SK-N-SH (cell line): ENCODE measurements at regions of chr11 and their contacts with region 1.

Region 1: DNA sequence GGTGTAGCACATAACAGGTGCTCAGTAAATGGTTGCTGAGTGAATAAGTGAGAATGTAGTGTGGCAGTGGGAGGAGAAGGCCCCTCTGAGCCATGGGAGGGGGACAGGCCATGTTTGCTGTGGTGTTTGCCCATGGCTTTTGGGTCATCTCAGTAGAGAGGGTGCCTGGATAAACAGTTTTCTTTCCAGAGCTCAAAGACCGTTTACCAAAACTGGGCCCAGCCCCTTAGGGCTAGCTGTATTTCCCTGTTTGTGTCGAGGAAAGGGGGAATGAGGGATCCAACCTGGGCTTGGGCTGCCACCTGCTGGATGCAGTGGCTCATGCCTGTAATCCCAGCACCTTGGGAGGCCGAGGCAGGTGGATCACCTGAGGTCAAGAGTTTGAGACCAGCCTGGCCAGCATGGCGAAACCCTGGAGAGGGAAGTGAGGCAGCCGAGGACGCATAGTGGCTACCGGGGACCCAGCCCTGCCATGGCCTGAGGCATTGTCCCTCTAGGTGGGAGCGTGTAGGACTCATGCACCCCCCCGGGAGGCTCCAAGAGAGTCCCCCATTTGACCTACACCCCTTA is 8.7 kb upstream of the LTO1 start:
- DNase-seq: no peak
- H3K4me3 ChIP-seq: no peak overlapping the region
- H3K27ac ChIP-seq: no peak overlapping the region
- H3K4me1 ChIP-seq: no peaks in the 10 kb centered on the region; a peak in 1 of 4 replicates
- H3K27me3 ChIP-seq: no peaks in the 10 kb centered on the region
- CTCF ChIP-seq: peak; percentile 47
- EP300 ChIP-seq: no peak
- RAD21 ChIP-seq: peak; percentile 59

Region 2: GRCh38 chr11:69670158-69670845 is 13.5 kb before region 1 on chr11:
- CTCF ChIA-PET with region 1: interaction called, 24 read pairs
- POLR2A ChIA-PET with region 1: no interaction called
- DNase-seq: peak; percentile 93
- H3K4me3 ChIP-seq: no peak overlapping the region; a peak in 1 of 4 replicates
- H3K27ac ChIP-seq: peak overlapping the region; percentile 20 to 39; a peak in 2 of 4 replicates
- H3K4me1 ChIP-seq: peaks cover 8 to 20% of the 10 kb centered on the region in 2 experiments; a peak in 3 of 4 replicates
- H3K27me3 ChIP-seq: no peaks in the 10 kb centered on the region
- CTCF ChIP-seq: peak; percentile 94
- EP300 ChIP-seq: no peak
- RAD21 ChIP-seq: peak; percentile 91

Region 3: DNA sequence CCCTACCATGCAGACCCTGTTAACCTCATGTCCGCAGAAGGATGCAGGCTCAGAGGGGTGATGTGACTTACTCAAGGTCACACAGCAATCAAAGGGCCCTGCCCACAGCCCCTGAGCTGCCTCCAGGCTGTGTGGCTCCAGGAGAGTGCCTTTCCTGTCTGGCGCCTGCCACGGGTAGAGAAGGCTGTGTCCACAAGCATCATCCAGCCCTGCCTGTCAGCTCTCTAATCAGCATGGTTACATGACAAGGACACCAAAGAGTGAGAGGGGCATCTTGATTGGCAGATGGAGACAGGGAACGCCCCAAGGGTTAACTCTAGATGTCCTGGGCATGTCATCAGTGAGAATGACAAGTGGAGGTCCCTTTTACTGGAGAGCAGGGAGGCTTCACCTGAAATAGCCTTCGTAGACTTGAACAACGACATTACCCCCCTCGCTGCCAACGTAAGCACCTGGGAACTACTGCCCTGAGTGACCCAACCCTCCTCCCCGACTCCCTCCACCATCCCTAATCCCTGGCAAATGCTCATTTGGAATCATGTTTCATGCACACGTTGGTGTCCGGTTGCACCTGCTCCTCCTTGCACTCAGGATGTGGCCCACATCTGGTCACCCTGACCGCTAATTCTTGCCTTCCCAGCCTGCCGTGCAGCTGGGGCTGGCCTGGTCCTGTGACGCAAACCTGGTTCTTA is 13.1 kb after region 1 on chr11:
- CTCF ChIA-PET with region 1: interaction called, 12 read pairs
- POLR2A ChIA-PET with region 1: no interaction called
- DNase-seq: no peak
- H3K4me3 ChIP-seq: no peak overlapping the region
- H3K27ac ChIP-seq: no peak overlapping the region
- H3K4me1 ChIP-seq: peaks cover 0 to 19% of the 10 kb centered on the region in 2 experiments; a peak in 1 of 4 replicates
- H3K27me3 ChIP-seq: no peaks in the 10 kb centered on the region; the same call in 1 of the 2 replicates
- CTCF ChIP-seq: no peak
- EP300 ChIP-seq: no peak
- RAD21 ChIP-seq: no peak

Region 4: GRCh38 chr11:69744435-69744834 is 60.6 kb after region 1 on chr11:
- CTCF ChIA-PET with region 1: no interaction called
- POLR2A ChIA-PET with region 1: no interaction called
- DNase-seq: no peak
- H3K4me3 ChIP-seq: no peak overlapping the region
- H3K27ac ChIP-seq: no peak overlapping the region
- H3K4me1 ChIP-seq: no peaks in the 10 kb centered on the region
- H3K27me3 ChIP-seq: no peaks in the 10 kb centered on the region; the same call in 1 of the 2 replicates
- CTCF ChIP-seq: no peak
- EP300 ChIP-seq: no peak
- RAD21 ChIP-seq: no peak